ENCODE measurements at regions of chr7 and their contacts with region 1.

Region 1: DNA sequence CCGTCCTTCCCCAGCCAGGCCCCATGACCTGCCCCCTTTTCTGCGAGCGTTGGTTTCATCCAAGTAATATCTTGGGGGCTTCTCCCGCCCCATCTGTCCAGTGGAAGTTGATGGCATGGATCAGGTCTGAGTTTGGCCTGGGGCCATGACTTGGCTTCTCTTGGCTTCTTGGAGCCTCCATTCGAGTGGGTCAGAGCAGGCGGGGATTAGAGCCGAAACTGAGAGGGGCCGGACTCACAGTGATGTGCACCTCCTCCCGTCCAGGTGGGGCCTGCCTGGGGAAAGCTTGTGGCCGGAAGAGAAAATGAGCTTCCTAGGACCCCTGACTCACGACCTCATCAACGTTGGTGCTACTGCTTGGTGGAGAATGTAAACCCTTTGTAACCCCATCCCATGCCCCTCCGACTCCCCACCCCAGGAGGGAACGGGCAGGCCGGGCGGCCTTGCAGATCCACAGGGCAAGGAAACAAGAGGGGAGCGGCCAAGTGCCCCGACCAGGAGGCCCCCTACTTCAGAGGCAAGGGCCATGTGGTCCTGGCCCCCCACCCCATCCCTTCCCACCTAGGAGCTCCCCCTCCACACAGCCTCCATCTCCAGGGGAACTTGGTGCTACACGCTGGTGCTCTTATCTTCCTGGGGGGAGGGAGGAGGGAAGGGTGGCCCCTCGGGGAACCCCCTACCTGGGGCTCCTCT is 15.1 kb upstream of the LIMK1 start:
- DNase-seq: no peak
- ATAC-seq: no peak
- H3K4me3 Mint-ChIP-seq: no peak overlapping the region
- H3K27ac Mint-ChIP-seq: no peak overlapping the region
- H3K4me1 Mint-ChIP-seq: peaks cover 8% of the 10 kb centered on the region
- H3K27me3 Mint-ChIP-seq: no peaks in the 10 kb centered on the region

Region 2: GRCh38 chr7:73978661-73979563 is 89.6 kb before region 1 on chr7:
- CTCF ChIA-PET with region 1: no interaction called
- DNase-seq: no peak
- ATAC-seq: no peak
- H3K4me3 Mint-ChIP-seq: no peak overlapping the region
- H3K27ac Mint-ChIP-seq: no peak overlapping the region
- H3K4me1 Mint-ChIP-seq: no peaks in the 10 kb centered on the region
- H3K27me3 Mint-ChIP-seq: no peaks in the 10 kb centered on the region

Region 3: DNA sequence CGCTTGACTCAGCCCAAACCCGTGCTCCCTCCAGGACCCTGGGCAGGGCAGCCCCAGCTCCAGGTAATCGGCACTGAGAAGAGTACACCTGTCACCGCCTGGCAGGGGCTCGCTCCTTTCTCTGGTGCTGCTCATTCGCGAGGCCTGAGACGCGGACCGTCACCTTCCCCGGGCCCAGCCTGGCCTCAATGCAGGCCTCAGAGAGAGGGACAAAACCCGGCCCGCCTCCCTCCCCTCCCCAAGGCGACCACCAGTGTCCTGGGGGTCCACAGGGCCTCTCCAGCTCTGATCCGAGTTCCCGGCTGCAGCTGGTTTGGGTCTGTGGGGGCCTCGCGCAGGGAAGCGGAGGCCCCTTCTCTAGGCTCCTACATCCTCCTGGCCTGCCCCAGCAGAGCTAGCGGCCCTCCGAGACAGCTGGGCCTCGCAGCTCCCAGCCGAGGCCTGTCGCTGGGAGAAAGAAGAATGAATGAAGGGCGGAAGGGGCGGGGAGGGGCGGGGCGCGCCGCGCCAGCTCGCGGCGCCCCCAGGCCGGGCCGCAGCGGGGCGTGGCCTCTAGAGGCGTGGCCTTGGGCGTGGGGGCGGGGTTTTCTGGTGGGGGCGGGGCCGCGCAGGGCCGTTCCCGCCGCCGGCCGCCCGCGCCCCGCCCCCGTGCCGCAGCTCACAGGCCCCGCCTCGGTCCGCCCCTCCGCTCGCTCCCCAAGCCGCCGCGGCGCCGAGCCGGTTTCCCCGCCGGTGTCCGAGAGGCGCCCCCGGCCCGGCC is 14.8 kb after region 1 on chr7 and contains the start of gene LIMK1:
- CTCF ChIA-PET with region 1: interaction called, 31 read pairs
- DNase-seq: peak; percentile 83
- ATAC-seq: peak; percentile 89
- H3K4me3 Mint-ChIP-seq: peak within 1 kb of the TSS; percentile 75
- H3K27ac Mint-ChIP-seq: peak within 1 kb of the TSS; percentile 82
- H3K4me1 Mint-ChIP-seq: peaks cover 12% of the 10 kb centered on the region
- H3K27me3 Mint-ChIP-seq: no peaks in the 10 kb centered on the region
- total RNA-seq, gene LIMK1: 44.8 to 49.5 TPM

Region 4: DNA sequence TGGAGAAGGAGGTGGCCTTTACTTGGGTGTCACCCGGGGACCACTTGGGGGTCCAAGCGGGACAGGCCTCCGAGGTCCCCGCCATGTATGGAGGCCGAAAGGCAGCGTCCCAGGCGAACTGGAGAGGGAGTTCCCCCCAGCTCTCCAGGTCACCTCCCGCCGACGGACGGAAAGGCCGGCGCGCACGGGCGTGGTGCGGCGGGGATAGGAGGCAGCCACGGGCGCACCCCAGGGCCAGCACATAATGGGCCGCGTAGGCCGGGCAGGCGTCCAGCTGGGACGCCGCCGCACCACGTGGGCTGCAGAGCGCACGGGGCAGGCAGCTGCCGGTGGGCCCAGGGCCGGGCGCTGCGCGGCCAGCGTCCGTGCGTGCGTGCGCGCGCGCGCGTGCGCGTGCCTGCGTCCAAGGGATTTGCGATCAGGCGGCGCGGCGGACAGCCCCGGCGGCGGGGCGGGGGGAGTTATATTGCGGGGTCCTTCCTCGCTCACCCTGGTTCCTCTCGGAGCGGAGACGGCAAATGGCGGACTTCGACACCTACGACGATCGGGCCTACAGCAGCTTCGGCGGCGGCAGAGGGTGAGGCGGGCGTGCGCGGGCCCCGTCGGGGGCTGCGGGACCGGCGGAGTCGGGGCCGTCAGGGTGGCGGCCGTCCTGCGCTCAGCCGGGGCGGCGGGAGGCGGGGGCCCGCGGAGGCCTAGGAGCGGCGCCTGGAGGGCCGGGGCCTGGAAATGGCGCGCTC is 105.5 kb after region 1 on chr7 and contains the start of gene EIF4H:
- CTCF ChIA-PET with region 1: interaction called, 13 read pairs
- DNase-seq: peak; percentile 94
- ATAC-seq: peak; percentile 88
- H3K4me3 Mint-ChIP-seq: peak within 1 kb of the TSS; percentile 87
- H3K27ac Mint-ChIP-seq: peak within 1 kb of the TSS; percentile 86
- H3K4me1 Mint-ChIP-seq: peaks cover 41% of the 10 kb centered on the region
- H3K27me3 Mint-ChIP-seq: no peaks in the 10 kb centered on the region
- total RNA-seq, gene EIF4H: 278 to 322 TPM

Region 5: GRCh38 chr7:74183613-74184450 is 115.3 kb after region 1 on chr7:
- CTCF ChIA-PET with region 1: interaction called, 16 read pairs
- DNase-seq: peak; percentile 50
- ATAC-seq: peak; percentile 73
- H3K4me3 Mint-ChIP-seq: no peak overlapping the region
- H3K27ac Mint-ChIP-seq: peak overlapping the region; percentile 54
- H3K4me1 Mint-ChIP-seq: peaks cover 66% of the 10 kb centered on the region
- H3K27me3 Mint-ChIP-seq: no peaks in the 10 kb centered on the region

Measured in activated CD8-positive, alpha-beta memory T cell treated with anti-CD3 and anti-CD28 coated beads, Interleukin-2, amount 10 ng/mL, durations not matched to agents 7 days and 5 days (primary cell).